ENCODE measurements at regions of chr22 and their contacts with region 1.

Region 1: GRCh38 chr22:40436505-40437451 is 66.4 kb downstream of the SGSM3 start:
- DNase-seq: peak; percentile 18
- H3K4me3 Mint-ChIP-seq: no peak overlapping the region
- H3K27ac Mint-ChIP-seq: peak overlapping the region; percentile 72
- H3K4me1 Mint-ChIP-seq: peaks cover 53% of the 10 kb centered on the region
- H3K27me3 Mint-ChIP-seq: no peaks in the 10 kb centered on the region

Region 2: DNA sequence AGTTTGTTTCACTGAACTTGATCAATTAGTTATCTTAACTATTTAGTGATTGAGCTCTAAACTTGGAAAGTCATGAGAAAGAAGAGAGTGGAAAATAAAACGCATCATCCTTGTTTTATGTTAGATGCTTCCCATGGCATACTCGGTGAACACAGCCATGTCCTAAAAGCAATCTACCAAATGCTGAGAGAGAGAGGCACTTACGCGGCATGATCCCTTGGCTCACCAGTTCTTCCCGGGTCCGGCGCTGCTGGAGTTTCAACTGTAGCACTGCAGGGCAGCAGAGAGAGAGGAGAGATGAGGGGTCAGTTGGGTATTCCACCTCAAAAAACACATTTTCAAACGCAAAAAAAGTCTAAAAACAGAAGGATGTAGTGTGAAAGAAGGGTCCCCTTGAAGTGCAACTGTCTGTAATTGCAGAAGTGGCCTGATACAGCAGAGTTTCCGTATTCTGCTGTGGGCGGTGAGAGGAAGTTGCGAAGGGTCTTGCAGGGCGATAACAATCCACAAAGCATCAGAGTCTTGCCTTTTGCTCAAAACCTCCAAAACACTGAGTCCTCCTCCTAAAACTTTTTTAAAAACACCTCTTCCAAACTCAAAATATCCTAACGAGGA is 26.3 kb after region 1 on chr22:
- CTCF ChIA-PET with region 1: interaction called, 13 read pairs
- intact Hi-C with region 1: loop called (anchors 2 kb)
- DNase-seq: peak; percentile 66
- H3K4me3 Mint-ChIP-seq: peak overlapping the region; percentile 97
- H3K27ac Mint-ChIP-seq: peak overlapping the region; percentile 97
- H3K4me1 Mint-ChIP-seq: peaks cover 68% of the 10 kb centered on the region
- H3K27me3 Mint-ChIP-seq: no peaks in the 10 kb centered on the region

Region 3: GRCh38 chr22:40479126-40479800 is 42.5 kb after region 1 on chr22:
- CTCF ChIA-PET with region 1: interaction called, 104 read pairs
- intact Hi-C with region 1: loop called (anchors 1 kb)
- DNase-seq: no peak
- H3K4me3 Mint-ChIP-seq: no peak overlapping the region
- H3K27ac Mint-ChIP-seq: no peak overlapping the region
- H3K4me1 Mint-ChIP-seq: peaks cover 23% of the 10 kb centered on the region
- H3K27me3 Mint-ChIP-seq: no peaks in the 10 kb centered on the region

Region 4: DNA sequence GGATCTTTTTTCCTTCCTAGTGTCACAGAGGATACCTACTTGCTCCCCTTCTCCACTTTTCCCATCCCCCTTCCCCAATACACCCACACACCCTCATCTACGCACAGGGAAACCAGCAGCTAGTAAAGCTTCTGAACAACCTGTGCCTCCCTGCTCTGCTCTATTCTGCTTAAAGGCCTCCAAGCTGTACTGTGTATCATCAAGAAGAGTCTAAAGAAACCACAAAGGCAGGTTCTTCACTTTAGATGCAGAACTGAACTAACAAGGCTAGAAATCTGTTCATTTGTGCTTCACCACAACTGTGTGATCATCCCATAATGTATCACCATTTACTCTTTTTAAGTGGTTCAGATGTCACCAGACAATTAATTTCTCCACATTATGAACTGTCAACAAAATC is 66.1 kb after region 1 on chr22:
- CTCF ChIA-PET with region 1: interaction called, 14 read pairs
- intact Hi-C with region 1: no loop called
- DNase-seq: no peak
- H3K4me3 Mint-ChIP-seq: no peak overlapping the region
- H3K27ac Mint-ChIP-seq: peak overlapping the region; percentile 4
- H3K4me1 Mint-ChIP-seq: peaks cover 25% of the 10 kb centered on the region
- H3K27me3 Mint-ChIP-seq: no peaks in the 10 kb centered on the region

Region 5: GRCh38 chr22:40645579-40646197 is 208.9 kb after region 1 on chr22:
- CTCF ChIA-PET with region 1: interaction called, 102 read pairs
- intact Hi-C with region 1: loop called (anchors 1 kb)
- DNase-seq: no peak
- H3K4me3 Mint-ChIP-seq: no peak overlapping the region
- H3K27ac Mint-ChIP-seq: no peak overlapping the region
- H3K4me1 Mint-ChIP-seq: peaks cover 4% of the 10 kb centered on the region
- H3K27me3 Mint-ChIP-seq: no peaks in the 10 kb centered on the region